Activated CD8-positive, alpha-beta T cell treated with anti-CD3 and anti-CD28 coated beads for 36 hours (primary cell): ENCODE measurements at regions of chr2 and their contacts with region 1.

Region 1: GRCh38 chr2:38581193-38582147 is 21.3 kb downstream of the HNRNPLL start:
- DNase-seq: peak; percentile 58
- ATAC-seq: peak; percentile 85
- H3K4me3 Mint-ChIP-seq: no peak overlapping the region
- H3K27ac Mint-ChIP-seq: peak overlapping the region; percentile 27
- H3K4me1 Mint-ChIP-seq: peaks cover 21% of the 10 kb centered on the region
- H3K27me3 Mint-ChIP-seq: no peaks in the 10 kb centered on the region
- CTCF ChIP-seq: peak; percentile 80

Region 2: GRCh38 chr2:38523728-38524437 is 57.6 kb before region 1 on chr2:
- CTCF ChIA-PET with region 1: no interaction called
- POLR2A ChIA-PET with region 1: no interaction called
- intact Hi-C with region 1: no loop called
- DNase-seq: no peak
- ATAC-seq: no peak
- H3K4me3 Mint-ChIP-seq: no peak overlapping the region
- H3K27ac Mint-ChIP-seq: no peak overlapping the region
- H3K4me1 Mint-ChIP-seq: peaks cover 4% of the 10 kb centered on the region
- H3K27me3 Mint-ChIP-seq: peaks cover 18% of the 10 kb centered on the region
- CTCF ChIP-seq: no peak

Region 3: GRCh38 chr2:38554973-38555595 is 26.4 kb before region 1 on chr2:
- CTCF ChIA-PET with region 1: interaction called, 10 read pairs
- POLR2A ChIA-PET with region 1: no interaction called
- intact Hi-C with region 1: no loop called
- DNase-seq: no peak
- ATAC-seq: no peak
- H3K4me3 Mint-ChIP-seq: no peak overlapping the region
- H3K27ac Mint-ChIP-seq: no peak overlapping the region
- H3K4me1 Mint-ChIP-seq: peaks cover 19% of the 10 kb centered on the region
- H3K27me3 Mint-ChIP-seq: no peaks in the 10 kb centered on the region
- CTCF ChIP-seq: peak; percentile 40

Region 4: DNA sequence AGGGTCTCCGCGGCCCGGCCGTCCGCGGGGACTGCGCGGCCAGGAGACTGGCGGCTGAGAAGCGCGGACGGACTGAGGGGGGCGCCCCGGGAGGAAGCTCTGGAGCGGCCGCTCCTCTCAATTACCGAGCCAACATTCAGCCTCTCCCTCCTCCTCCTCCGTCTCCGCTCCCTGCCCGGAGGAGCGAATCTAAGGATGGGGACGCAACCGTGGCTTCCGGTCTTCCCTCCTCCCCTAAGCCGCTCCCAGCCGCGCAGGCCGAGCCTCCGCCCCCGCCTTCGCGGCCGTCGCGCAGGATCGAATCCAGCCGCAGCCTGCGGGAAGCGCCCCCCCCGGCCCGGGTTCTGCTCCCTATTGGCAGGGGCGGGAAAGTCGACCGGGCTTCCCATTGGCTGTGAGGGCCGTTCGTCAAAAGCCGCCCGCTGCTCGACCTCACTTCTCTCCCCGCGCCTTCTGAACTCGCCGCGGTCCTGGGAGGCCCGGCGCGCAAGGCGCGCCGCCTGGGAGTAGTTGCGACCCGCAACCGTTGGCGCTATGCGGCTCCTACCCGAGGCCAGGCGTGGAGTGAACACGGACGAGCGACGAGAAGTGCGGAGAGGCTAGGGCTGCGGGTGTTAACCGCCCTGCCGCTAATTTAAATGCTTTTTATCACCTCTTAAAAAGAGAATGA is 21.4 kb after region 1 on chr2 and contains the start of gene HNRNPLL:
- CTCF ChIA-PET with region 1: interaction called, 168 read pairs
- POLR2A ChIA-PET with region 1: interaction called, 3 read pairs
- intact Hi-C with region 1: no loop called
- DNase-seq: peak; percentile 97
- ATAC-seq: peak; percentile 88
- H3K4me3 Mint-ChIP-seq: peak within 1 kb of the TSS; percentile 82
- H3K27ac Mint-ChIP-seq: peak within 1 kb of the TSS; percentile 88
- H3K4me1 Mint-ChIP-seq: peaks cover 44% of the 10 kb centered on the region
- H3K27me3 Mint-ChIP-seq: no peaks in the 10 kb centered on the region
- CTCF ChIP-seq: no peak
- total RNA-seq, gene HNRNPLL: 54.9 to 55.3 TPM

Region 5: GRCh38 chr2:38672445-38673391 is 91.2 kb after region 1 on chr2:
- CTCF ChIA-PET with region 1: interaction called, 22 read pairs
- POLR2A ChIA-PET with region 1: interaction called, 6 read pairs
- intact Hi-C with region 1: no loop called
- DNase-seq: no peak
- ATAC-seq: no peak
- H3K4me3 Mint-ChIP-seq: no peak overlapping the region
- H3K27ac Mint-ChIP-seq: peak overlapping the region; percentile 2
- H3K4me1 Mint-ChIP-seq: peaks cover 51% of the 10 kb centered on the region
- H3K27me3 Mint-ChIP-seq: no peaks in the 10 kb centered on the region
- CTCF ChIP-seq: no peak

Region 6: GRCh38 chr2:38704664-38705063 is 123.2 kb after region 1 on chr2:
- CTCF ChIA-PET with region 1: interaction called, 13 read pairs
- POLR2A ChIA-PET with region 1: no interaction called
- intact Hi-C with region 1: no loop called
- DNase-seq: no peak
- ATAC-seq: no peak
- H3K4me3 Mint-ChIP-seq: no peak overlapping the region
- H3K27ac Mint-ChIP-seq: no peak overlapping the region
- H3K4me1 Mint-ChIP-seq: peaks cover 60% of the 10 kb centered on the region
- H3K27me3 Mint-ChIP-seq: no peaks in the 10 kb centered on the region
- CTCF ChIP-seq: no peak

Region 7: DNA sequence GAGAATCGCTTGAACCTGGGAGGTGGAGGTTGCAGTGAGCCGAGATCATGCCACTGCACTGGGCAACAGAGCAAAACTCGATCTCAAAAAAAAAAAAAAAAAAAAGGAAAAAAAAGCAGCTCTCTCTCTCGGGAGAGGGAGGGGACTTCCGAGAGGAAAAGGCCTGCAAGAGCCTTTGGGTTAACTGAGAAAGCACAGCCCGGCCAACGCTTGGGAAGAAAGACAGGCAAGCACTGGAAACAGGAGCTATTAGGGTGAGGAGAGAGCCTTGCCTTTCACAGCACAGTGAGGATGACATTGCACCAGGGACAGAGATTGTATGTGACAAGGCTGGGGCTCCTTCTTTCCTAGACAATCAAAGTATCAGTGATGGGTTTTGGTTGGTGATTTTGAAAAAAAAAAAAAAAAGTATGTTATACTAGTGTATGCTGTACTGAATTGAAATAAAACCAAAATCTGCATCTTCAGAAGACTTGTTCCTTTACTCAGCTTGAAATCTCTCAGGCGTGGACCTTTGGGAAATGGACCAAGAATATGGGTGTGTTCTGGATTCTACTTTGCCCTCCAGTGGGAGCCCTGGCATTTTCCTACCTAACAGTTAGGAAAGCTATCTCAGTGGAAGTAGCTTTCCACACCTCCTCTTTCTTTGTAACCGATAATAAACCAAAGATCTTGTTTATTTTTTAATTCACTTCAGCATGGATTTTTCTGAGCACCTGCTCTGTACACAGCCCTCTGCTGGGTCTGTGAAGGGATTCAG is 153.0 kb after region 1 on chr2:
- CTCF ChIA-PET with region 1: interaction called, 95 read pairs
- POLR2A ChIA-PET with region 1: interaction called, 4 read pairs
- intact Hi-C with region 1: no loop called
- DNase-seq: no peak
- ATAC-seq: no peak
- H3K4me3 Mint-ChIP-seq: no peak overlapping the region
- H3K27ac Mint-ChIP-seq: peak overlapping the region; percentile 50
- H3K4me1 Mint-ChIP-seq: peaks cover 10% of the 10 kb centered on the region
- H3K27me3 Mint-ChIP-seq: no peaks in the 10 kb centered on the region
- CTCF ChIP-seq: no peak